ENCODE measurements at regions of chr2 and their contacts with region 1.

Region 1: GRCh38 chr2:64214281-64215115 is 70.3 kb upstream of the PELI1 start:
- DNase-seq: peak; percentile 59
- H3K4me3 Mint-ChIP-seq: peak overlapping the region; percentile 63
- H3K27ac Mint-ChIP-seq: peak overlapping the region; percentile 97
- H3K4me1 Mint-ChIP-seq: peaks cover 56% of the 10 kb centered on the region
- H3K27me3 Mint-ChIP-seq: no peaks in the 10 kb centered on the region

Region 2: GRCh38 chr2:62340994-62341484 is 1873.5 kb before region 1 on chr2:
- CTCF ChIA-PET with region 1: no interaction called
- POLR2A ChIA-PET with region 1: no interaction called
- intact Hi-C with region 1: no loop called
- DNase-seq: peak; percentile 34
- H3K4me3 Mint-ChIP-seq: no peak overlapping the region
- H3K27ac Mint-ChIP-seq: no peak overlapping the region
- H3K4me1 Mint-ChIP-seq: peaks cover 2% of the 10 kb centered on the region
- H3K27me3 Mint-ChIP-seq: no peaks in the 10 kb centered on the region

Region 3: GRCh38 chr2:63903003-63903402 is 311.5 kb before region 1 on chr2:
- CTCF ChIA-PET with region 1: no interaction called
- POLR2A ChIA-PET with region 1: no interaction called
- intact Hi-C with region 1: no loop called
- DNase-seq: no peak
- H3K4me3 Mint-ChIP-seq: no peak overlapping the region
- H3K27ac Mint-ChIP-seq: no peak overlapping the region
- H3K4me1 Mint-ChIP-seq: peaks cover 3% of the 10 kb centered on the region
- H3K27me3 Mint-ChIP-seq: no peaks in the 10 kb centered on the region

Region 4: DNA sequence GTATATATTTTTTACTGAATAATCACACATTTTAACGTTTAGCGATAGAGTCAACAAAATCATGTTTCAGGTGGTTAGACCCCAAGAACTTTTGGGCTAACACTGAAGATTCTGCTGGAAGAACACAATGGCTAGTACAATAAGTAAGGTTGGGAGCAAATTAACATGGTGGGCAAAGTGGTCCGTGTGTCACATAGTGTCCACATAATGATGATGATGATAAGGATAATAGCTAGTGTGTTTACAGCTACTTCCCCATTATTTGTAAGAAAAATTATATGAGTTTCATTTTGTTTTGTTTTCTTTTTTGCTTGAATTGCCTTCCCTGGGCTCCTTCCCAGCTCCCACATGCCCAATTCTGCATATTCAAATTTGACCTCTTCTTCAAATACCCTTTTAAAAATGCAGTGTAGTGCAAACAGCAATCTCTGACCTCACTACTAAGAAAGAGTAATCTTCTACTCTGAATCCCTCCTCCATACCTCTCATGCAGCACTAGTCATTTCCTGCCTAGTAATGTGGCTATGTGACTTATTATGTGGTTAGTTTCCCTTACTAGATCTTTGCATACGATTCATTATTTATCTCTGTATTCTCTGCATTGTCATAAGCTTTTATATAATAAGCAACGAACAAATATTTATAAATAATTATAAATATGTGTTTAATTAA is 178.3 kb before region 1 on chr2:
- CTCF ChIA-PET with region 1: interaction called, 3 read pairs
- POLR2A ChIA-PET with region 1: interaction called, 5 read pairs
- intact Hi-C with region 1: loop called (anchors 1 kb)
- DNase-seq: peak; percentile 27
- H3K4me3 Mint-ChIP-seq: peak overlapping the region; percentile 3
- H3K27ac Mint-ChIP-seq: peak overlapping the region; percentile 75
- H3K4me1 Mint-ChIP-seq: peaks cover 48% of the 10 kb centered on the region
- H3K27me3 Mint-ChIP-seq: peaks cover 2% of the 10 kb centered on the region

Region 5: DNA sequence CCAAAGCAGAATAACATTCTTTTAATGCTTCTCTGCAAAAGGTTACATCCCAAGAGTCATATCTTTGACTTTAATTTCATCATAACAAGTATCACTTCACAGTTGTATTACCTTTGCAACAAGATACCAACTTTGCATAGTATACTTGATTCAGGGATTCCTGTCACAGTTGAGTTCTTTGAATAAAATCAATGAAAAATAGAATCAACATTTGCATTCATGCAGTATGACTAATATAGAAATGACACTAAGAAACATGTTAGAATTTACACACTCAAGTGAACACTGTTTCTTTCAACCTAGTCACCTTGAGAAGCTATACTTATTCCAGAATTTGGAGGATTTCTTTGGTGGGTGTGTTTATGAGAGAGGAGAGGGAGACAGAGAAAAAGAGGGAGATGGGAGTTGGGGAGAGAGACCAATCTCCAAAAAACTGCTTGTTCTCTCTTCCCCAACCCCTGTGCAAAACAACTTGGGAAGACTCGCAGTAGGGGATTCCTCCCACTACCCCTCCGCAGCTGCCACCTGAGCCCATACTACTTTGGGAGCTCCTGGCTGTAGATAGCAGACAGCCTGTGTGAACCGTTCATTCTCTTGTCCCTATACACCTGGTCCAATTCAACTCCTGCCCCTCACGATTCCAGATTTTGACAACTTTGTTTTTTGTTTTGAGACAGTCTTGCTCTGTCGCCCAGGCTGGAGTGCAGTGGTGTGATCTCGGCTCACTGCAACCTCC is 128.0 kb before region 1 on chr2:
- CTCF ChIA-PET with region 1: no interaction called
- POLR2A ChIA-PET with region 1: no interaction called
- intact Hi-C with region 1: no loop called
- DNase-seq: no peak
- H3K4me3 Mint-ChIP-seq: no peak overlapping the region
- H3K27ac Mint-ChIP-seq: no peak overlapping the region
- H3K4me1 Mint-ChIP-seq: peaks cover 7% of the 10 kb centered on the region
- H3K27me3 Mint-ChIP-seq: peaks cover 4% of the 10 kb centered on the region

Region 6: GRCh38 chr2:64114063-64114911 is 100.2 kb before region 1 on chr2:
- CTCF ChIA-PET with region 1: interaction called, 3 read pairs
- POLR2A ChIA-PET with region 1: interaction called, 6 read pairs
- intact Hi-C with region 1: loop called (anchors 1 kb)
- DNase-seq: no peak
- H3K4me3 Mint-ChIP-seq: no peak overlapping the region
- H3K27ac Mint-ChIP-seq: peak overlapping the region; percentile 85
- H3K4me1 Mint-ChIP-seq: peaks cover 70% of the 10 kb centered on the region
- H3K27me3 Mint-ChIP-seq: no peaks in the 10 kb centered on the region

Region 7: DNA sequence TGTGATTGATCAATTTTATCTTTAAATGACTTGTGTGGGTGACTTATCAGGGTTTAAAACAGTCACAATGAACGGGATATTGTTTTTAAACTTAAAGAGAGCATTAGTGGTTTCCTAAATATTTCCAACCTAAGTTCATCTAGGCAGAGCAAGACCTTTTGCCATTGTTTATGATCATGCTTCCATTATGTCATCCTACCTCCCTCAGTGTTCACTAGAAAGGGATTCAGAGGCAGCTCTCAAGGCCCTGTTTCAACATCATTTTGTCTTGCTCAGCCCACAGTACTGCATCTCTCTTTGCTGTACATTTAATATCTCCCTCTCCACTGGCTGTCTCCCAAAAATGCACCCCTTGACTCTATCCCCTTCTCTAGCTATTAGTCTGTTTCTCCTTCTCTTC is 48.8 kb before region 1 on chr2:
- CTCF ChIA-PET with region 1: no interaction called
- POLR2A ChIA-PET with region 1: interaction called, 12 read pairs
- intact Hi-C with region 1: loop called (anchors 1 kb)
- DNase-seq: no peak
- H3K4me3 Mint-ChIP-seq: no peak overlapping the region
- H3K27ac Mint-ChIP-seq: no peak overlapping the region
- H3K4me1 Mint-ChIP-seq: no peaks in the 10 kb centered on the region
- H3K27me3 Mint-ChIP-seq: no peaks in the 10 kb centered on the region

Region 8: GRCh38 chr2:64233376-64233922 is 19.0 kb after region 1 on chr2:
- CTCF ChIA-PET with region 1: interaction called, 5 read pairs
- POLR2A ChIA-PET with region 1: interaction called, 14 read pairs
- intact Hi-C with region 1: loop called (anchors 1 kb)
- DNase-seq: no peak
- H3K4me3 Mint-ChIP-seq: no peak overlapping the region
- H3K27ac Mint-ChIP-seq: peak overlapping the region; percentile 40
- H3K4me1 Mint-ChIP-seq: peaks cover 9% of the 10 kb centered on the region
- H3K27me3 Mint-ChIP-seq: peaks cover 2% of the 10 kb centered on the region

Region 9: GRCh38 chr2:64988420-64989125 is 774.1 kb after region 1 on chr2:
- CTCF ChIA-PET with region 1: no interaction called
- POLR2A ChIA-PET with region 1: no interaction called
- intact Hi-C with region 1: loop called (anchors 5 kb)
- DNase-seq: peak; percentile 81
- H3K4me3 Mint-ChIP-seq: peak overlapping the region; percentile 59
- H3K27ac Mint-ChIP-seq: peak overlapping the region; percentile 65
- H3K4me1 Mint-ChIP-seq: peaks cover 54% of the 10 kb centered on the region
- H3K27me3 Mint-ChIP-seq: peaks cover 5% of the 10 kb centered on the region

Measured in activated CD4-positive, alpha-beta memory T cell treated with anti-CD3 and anti-CD28 coated beads for 36 hours (primary cell).